Caco-2 (cell line): ENCODE measurements at regions of chr2 and their contacts with region 1.

Region 1: DNA sequence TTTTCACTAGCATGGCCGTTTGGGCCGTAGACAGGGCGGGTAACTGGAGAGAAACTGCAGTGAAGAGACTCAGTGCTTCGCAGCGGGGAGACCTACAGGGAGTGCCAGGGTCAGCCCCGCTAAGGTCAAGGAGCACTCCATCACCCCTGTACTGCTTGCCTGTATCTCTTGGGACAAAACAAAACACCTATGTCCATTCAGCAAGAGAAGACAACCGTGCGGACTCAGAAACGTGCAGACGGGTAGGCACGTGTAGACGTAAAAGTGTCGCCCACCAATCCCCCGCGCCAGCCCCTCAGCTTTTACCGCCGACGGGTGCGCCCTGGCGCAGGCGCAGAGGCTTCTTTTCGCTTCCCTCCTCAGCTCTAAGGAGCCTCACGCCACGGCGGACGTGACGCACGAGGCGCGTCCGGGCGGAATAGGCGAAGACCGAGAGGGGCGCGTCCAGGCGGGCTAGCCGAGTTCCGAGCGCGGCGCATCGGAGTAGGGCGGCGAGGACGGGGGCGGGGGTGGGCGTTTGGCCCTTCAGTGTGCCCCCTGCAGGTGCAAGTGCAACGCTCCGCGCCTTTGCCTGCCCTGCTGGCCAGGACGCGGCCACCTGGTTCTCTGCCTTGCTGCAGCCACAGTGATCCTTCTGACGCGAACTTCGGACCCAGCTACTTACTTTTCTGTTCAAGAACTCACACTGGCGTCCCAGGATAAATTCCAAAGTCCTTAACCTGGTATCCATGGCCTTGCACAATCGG is 3.3 kb upstream of the SOS1 start:
- DNase-seq: peak; percentile 99
- H3K4me3 ChIP-seq: peak overlapping the region; percentile 70
- H3K4me3 Mint-ChIP-seq: peak overlapping the region; percentile 91
- H3K27ac Mint-ChIP-seq: peak overlapping the region; percentile 92
- H3K4me1 ChIP-seq: peaks cover 22% of the 10 kb centered on the region
- H3K4me1 Mint-ChIP-seq: peaks cover 13% of the 10 kb centered on the region
- H3K27me3 ChIP-seq: no peaks in the 10 kb centered on the region
- H3K27me3 Mint-ChIP-seq: no peaks in the 10 kb centered on the region
- CTCF ChIP-seq: peak; percentile 81 to 90

Region 2: DNA sequence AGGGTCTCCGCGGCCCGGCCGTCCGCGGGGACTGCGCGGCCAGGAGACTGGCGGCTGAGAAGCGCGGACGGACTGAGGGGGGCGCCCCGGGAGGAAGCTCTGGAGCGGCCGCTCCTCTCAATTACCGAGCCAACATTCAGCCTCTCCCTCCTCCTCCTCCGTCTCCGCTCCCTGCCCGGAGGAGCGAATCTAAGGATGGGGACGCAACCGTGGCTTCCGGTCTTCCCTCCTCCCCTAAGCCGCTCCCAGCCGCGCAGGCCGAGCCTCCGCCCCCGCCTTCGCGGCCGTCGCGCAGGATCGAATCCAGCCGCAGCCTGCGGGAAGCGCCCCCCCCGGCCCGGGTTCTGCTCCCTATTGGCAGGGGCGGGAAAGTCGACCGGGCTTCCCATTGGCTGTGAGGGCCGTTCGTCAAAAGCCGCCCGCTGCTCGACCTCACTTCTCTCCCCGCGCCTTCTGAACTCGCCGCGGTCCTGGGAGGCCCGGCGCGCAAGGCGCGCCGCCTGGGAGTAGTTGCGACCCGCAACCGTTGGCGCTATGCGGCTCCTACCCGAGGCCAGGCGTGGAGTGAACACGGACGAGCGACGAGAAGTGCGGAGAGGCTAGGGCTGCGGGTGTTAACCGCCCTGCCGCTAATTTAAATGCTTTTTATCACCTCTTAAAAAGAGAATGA is 521.3 kb before region 1 on chr2 and contains the start of gene HNRNPLL:
- CTCF ChIA-PET with region 1: no interaction called
- POLR2A ChIA-PET with region 1: no interaction called
- intact Hi-C with region 1: loop called (anchors 5 kb)
- DNase-seq: peak; percentile 99 to 100
- H3K4me3 ChIP-seq: peak within 1 kb of the TSS; percentile 87
- H3K4me3 Mint-ChIP-seq: peak within 1 kb of the TSS; percentile 92
- H3K27ac Mint-ChIP-seq: peak within 1 kb of the TSS; percentile 96
- H3K4me1 ChIP-seq: 0 out of 2 replicates have a peak, but pooled peaks cover 5% of the 10 kb centered on the region
- H3K4me1 Mint-ChIP-seq: peaks cover 6% of the 10 kb centered on the region
- H3K27me3 ChIP-seq: no peaks in the 10 kb centered on the region
- H3K27me3 Mint-ChIP-seq: no peaks in the 10 kb centered on the region
- CTCF ChIP-seq: peak in 1 of 2 experiments; percentile 12
- total RNA-seq, gene HNRNPLL: 58.0 and 59.4 TPM in 2 replicates

Region 3: DNA sequence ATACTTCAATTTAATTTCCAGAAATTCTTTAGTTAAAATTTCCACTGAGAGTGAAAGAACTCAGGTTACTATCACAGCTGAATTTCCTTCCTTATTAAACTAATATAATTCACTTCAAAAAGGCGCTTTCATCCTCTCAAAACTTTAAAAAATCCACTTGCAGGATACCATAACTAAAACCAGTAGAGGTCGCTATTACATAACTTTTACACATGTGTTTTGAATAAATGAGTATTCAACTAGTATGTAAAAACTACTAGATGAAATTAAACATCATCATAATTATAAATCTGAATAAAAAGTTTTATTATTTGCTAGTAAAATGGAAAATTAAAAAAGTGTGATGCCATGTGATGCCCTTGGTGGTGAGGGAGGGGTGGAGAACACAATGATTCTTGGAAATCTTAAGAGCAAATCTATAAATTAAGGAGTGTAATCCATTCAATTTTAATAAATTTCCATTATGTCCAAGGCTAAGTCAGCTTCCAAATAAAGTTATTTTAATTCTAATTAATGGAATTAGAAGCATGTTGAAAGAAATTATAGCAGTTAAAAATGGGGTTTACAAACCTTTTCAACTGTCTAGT is 64.7 kb before region 1 on chr2:
- CTCF ChIA-PET with region 1: no interaction called
- POLR2A ChIA-PET with region 1: interaction called, 4 read pairs
- intact Hi-C with region 1: loop called (anchors 1 kb)
- DNase-seq: peak in 1 of 2 experiments; percentile 36
- H3K4me3 ChIP-seq: no peak overlapping the region
- H3K4me3 Mint-ChIP-seq: no peak overlapping the region
- H3K27ac Mint-ChIP-seq: no peak overlapping the region
- H3K4me1 ChIP-seq: no peaks in the 10 kb centered on the region
- H3K4me1 Mint-ChIP-seq: peaks cover 6% of the 10 kb centered on the region
- H3K27me3 ChIP-seq: no peaks in the 10 kb centered on the region
- H3K27me3 Mint-ChIP-seq: no peaks in the 10 kb centered on the region
- CTCF ChIP-seq: peak; percentile 52 to 53

Region 4: GRCh38 chr2:39179974-39180970 is 56.1 kb after region 1 on chr2:
- CTCF ChIA-PET with region 1: no interaction called
- POLR2A ChIA-PET with region 1: no interaction called
- intact Hi-C with region 1: loop called (anchors 1 kb)
- DNase-seq: peak; percentile 67 to 86
- H3K4me3 ChIP-seq: no peak overlapping the region
- H3K4me3 Mint-ChIP-seq: no peak overlapping the region
- H3K27ac Mint-ChIP-seq: no peak overlapping the region
- H3K4me1 ChIP-seq: peaks cover 20% of the 10 kb centered on the region
- H3K4me1 Mint-ChIP-seq: peaks cover 7% of the 10 kb centered on the region
- H3K27me3 ChIP-seq: no peaks in the 10 kb centered on the region
- H3K27me3 Mint-ChIP-seq: no peaks in the 10 kb centered on the region
- CTCF ChIP-seq: no peak

Region 5: GRCh38 chr2:39227628-39228412 is 103.6 kb after region 1 on chr2:
- CTCF ChIA-PET with region 1: interaction called, 42 read pairs
- POLR2A ChIA-PET with region 1: interaction called, 11 read pairs
- intact Hi-C with region 1: loop called (anchors 1 kb)
- DNase-seq: peak; percentile 76 to 83
- H3K4me3 ChIP-seq: no peak overlapping the region
- H3K4me3 Mint-ChIP-seq: peak overlapping the region; percentile 5
- H3K27ac Mint-ChIP-seq: no peak overlapping the region
- H3K4me1 ChIP-seq: peaks cover 10% of the 10 kb centered on the region
- H3K4me1 Mint-ChIP-seq: peaks cover 17% of the 10 kb centered on the region
- H3K27me3 ChIP-seq: no peaks in the 10 kb centered on the region
- H3K27me3 Mint-ChIP-seq: no peaks in the 10 kb centered on the region
- CTCF ChIP-seq: peak; percentile 84 to 94